Naive thymus-derived CD8-positive, alpha-beta T cell (primary cell): ENCODE measurements at regions of chr15 and their contacts with region 1.

Region 1: GRCh38 chr15:31435261-31435911 is 108.8 kb downstream of the KLF13 start:
- DNase-seq: peak; percentile 49 to 94 (median 86)
- ATAC-seq: peak; percentile 73 to 78
- H3K4me3 Mint-ChIP-seq: peak overlapping the region; percentile 77 to 91 (median 84)
- H3K27ac Mint-ChIP-seq: peak overlapping the region; percentile 93 to 100 (median 100)
- H3K4me1 Mint-ChIP-seq: peaks cover 45 to 89% (median 79%) of the 10 kb centered on the region in 4 donors
- H3K27me3 Mint-ChIP-seq: no peaks in the 10 kb centered on the region

Region 2: DNA sequence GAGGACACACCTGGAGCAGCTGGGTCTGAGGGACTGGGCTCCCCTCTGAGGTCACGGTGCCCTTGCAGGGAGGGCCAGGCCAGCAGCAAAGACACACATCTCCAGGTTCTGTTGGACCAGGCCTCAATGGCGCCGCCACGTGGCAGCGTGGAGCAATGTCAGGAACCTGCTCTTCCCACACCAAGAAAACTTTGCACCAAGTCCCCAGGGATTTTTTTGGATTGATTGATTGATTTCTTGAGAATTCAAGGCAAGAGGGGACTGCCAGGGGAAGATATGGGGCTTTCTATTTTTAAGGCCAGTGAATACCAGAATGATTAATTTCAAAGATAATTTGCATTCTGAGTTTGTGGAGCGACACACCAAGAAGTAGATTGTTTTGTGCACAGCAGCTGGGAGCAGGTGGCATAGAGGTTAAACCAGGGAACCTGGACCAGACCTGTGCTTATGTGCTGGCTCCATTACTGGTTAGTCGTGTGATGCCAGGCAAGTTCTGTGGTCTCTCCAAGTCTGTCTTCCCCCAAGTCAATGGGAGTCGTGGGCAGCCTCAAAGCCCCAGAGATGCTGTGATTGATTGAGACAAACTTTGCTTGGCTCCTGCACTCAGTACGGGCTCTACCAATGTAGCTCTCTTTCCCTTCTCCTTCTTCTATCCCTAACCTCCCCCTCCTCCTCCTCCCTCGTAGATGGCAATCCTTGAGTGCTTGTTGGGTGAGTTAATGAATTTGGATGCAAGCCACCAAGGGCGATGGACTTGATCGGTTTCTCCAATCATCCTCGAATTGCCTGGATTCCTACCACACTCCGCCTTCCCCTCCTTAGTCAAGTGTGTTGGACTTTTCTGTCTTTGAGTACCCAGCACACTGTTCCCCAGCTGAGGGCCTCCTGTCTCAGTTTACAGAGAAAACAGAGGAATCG is 237.6 kb before region 1 on chr15:
- POLR2A ChIA-PET with region 1: no interaction called
- DNase-seq: peak in 7 of 10 donors; percentile 26 to 41 (median 37)
- ATAC-seq: peak in 1 of 2 donors; percentile 38
- H3K4me3 Mint-ChIP-seq: no peak overlapping the region
- H3K27ac Mint-ChIP-seq: peak overlapping the region in 3 of 10 donors; percentile 39 to 76 (median 48)
- H3K4me1 Mint-ChIP-seq: peaks cover 11 to 20% (median 14%) of the 10 kb centered on the region in 4 donors
- H3K27me3 Mint-ChIP-seq: peaks cover 0 to 2% (median 0%) of the 10 kb centered on the region in 5 donors

Region 3: DNA sequence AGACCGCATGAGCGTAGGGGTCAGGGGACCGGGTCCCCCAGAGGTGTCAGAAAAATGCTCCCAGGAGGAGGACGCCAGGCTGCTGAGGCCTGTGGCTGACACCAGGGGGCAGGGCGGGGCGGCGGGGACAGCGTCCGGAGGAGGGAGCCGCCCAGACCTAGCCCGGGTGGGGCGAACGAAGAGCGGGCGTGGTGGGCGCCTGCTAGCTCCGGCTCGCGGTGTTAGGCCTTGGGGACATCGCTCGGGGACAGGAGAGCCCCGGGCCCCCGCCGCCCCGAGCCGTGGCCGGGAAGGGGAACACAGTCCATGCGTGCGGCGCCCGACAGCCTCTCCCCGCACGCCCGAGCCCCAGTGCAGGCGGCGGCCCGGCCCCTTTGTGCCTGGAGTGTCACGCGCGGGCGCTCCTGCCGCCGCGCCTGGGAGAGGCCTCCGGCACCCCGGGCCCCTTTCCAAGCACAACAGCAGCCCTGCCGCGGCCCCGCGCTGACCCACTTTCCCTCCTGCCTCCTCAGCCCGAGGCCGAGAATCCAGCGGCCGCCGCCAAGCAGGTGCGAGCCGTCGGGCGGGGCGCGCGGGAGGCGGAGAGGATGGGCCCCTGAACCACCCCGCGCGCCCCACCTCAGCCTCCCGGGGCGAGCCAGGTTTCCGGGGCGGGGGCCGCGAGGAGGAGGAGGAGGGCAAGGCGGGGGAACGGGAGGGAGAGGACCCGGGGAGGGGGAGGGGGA is 219.7 kb before region 1 on chr15:
- POLR2A ChIA-PET with region 1: interaction called, 10 read pairs
- DNase-seq: peak; percentile 52 to 84 (median 73)
- ATAC-seq: peak; percentile 72 to 78
- H3K4me3 Mint-ChIP-seq: peak overlapping the region; percentile 48 to 88 (median 68)
- H3K27ac Mint-ChIP-seq: peak overlapping the region in 9 of 10 donors; percentile 4 to 92 (median 85)
- H3K4me1 Mint-ChIP-seq: peaks cover 16 to 45% (median 35%) of the 10 kb centered on the region in 4 donors
- H3K27me3 Mint-ChIP-seq: no peaks in the 10 kb centered on the region

Region 4: GRCh38 chr15:31279221-31280045 is 156.0 kb before region 1 on chr15:
- POLR2A ChIA-PET with region 1: no interaction called
- DNase-seq: peak in 1 of 10 donors; percentile 11
- ATAC-seq: no peak
- H3K4me3 Mint-ChIP-seq: no peak overlapping the region
- H3K27ac Mint-ChIP-seq: peak overlapping the region in 5 of 10 donors; percentile 2 to 67 (median 45)
- H3K4me1 Mint-ChIP-seq: peaks cover 9 to 21% (median 14%) of the 10 kb centered on the region in 4 donors
- H3K27me3 Mint-ChIP-seq: no peaks in the 10 kb centered on the region

Region 5: DNA sequence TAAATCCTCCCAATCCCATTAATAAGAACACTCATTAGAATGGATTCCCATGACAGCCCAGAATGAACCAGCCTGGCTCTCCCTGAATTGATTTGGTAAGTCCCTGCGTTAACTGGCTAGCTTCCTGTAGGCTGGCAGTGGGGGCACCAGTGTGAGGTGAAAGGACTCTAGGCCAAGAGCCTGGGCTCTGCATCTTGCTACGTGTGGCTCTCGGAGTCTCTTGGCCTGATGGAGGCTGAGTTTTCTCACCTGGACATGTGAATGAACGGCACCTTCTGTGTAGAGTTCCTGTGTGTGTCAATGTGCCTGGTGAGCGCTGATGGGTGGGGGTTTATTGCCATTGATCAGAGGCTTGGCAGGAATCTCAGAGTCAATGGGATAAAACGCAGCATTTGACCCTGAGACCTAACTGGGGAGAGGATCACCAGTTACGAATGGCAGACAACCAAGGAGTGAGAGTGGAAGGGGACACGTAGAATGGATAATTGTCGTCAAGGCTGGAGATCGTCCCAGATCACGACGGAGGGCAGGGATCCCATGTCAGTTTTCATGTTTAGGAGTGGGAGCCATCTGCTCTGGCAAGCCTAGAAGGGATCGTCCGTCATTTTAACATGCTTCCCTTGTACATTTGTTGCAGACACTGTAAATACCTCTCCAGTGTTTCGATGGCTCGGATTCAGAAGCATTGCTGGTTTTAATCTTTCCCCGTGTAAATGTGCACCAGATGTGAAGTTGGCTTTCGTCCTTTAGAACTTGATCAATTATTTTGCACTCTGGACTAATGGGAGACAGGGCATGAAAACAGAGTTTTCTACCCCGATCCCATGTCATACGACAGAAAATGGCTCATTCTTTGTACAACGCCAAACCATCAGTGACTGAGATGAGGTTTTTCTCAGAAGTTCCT is 117.7 kb before region 1 on chr15:
- POLR2A ChIA-PET with region 1: no interaction called
- DNase-seq: peak in 1 of 10 donors; percentile 44
- ATAC-seq: no peak
- H3K4me3 Mint-ChIP-seq: no peak overlapping the region
- H3K27ac Mint-ChIP-seq: peak overlapping the region in 4 of 10 donors; percentile 22 to 35 (median 25)
- H3K4me1 Mint-ChIP-seq: peaks cover 21 to 55% (median 49%) of the 10 kb centered on the region in 4 donors
- H3K27me3 Mint-ChIP-seq: no peaks in the 10 kb centered on the region

Region 6: GRCh38 chr15:31338879-31339557 is 96.4 kb before region 1 on chr15:
- POLR2A ChIA-PET with region 1: interaction called, 104 read pairs
- DNase-seq: no peak
- ATAC-seq: peak in 1 of 2 donors; percentile 14
- H3K4me3 Mint-ChIP-seq: peak overlapping the region; percentile 46 to 98 (median 72)
- H3K27ac Mint-ChIP-seq: peak overlapping the region; percentile 85 to 100 (median 98)
- H3K4me1 Mint-ChIP-seq: peaks cover 55 to 100% (median 98%) of the 10 kb centered on the region in 4 donors
- H3K27me3 Mint-ChIP-seq: no peaks in the 10 kb centered on the region

Region 7: GRCh38 chr15:31379042-31379441 is 56.3 kb before region 1 on chr15:
- POLR2A ChIA-PET with region 1: interaction called, 22 read pairs
- DNase-seq: peak in 2 of 10 donors; percentile 33 to 36
- ATAC-seq: peak; percentile 30 to 41
- H3K4me3 Mint-ChIP-seq: peak overlapping the region in 8 of 10 donors; percentile 15 to 79 (median 74)
- H3K27ac Mint-ChIP-seq: peak overlapping the region; percentile 84 to 97 (median 94)
- H3K4me1 Mint-ChIP-seq: peaks cover 32 to 73% (median 70%) of the 10 kb centered on the region in 4 donors
- H3K27me3 Mint-ChIP-seq: no peaks in the 10 kb centered on the region

Region 8: DNA sequence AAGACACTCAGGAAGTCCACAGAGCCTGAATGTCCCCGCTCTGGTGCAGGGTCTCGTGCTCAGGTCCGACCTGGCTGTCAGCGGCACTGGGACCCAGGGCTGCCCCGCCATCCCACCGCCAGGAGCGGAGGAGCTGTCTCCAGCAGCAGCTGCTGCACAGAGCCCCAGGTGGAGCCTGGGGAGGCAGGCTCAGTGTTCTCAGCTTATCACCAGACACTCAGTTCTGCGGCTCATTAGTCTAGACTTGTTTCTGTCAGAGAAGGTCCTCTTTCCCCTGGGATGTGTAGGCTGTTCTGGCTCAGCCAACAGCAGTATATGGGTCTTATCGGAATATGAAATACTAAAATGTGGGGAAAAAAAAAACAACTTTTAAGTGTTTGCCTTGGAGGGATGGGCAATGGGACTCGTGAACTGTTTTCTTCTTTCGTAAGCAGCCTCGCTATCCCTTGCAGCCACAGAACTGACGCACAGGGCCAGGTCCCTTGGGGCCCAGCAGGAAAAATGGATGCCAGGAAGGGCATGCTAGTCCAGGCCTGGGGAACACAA is 32.8 kb before region 1 on chr15:
- POLR2A ChIA-PET with region 1: interaction called, 23 read pairs
- DNase-seq: no peak
- ATAC-seq: no peak
- H3K4me3 Mint-ChIP-seq: no peak overlapping the region
- H3K27ac Mint-ChIP-seq: peak overlapping the region in 3 of 10 donors; percentile 74 to 93 (median 86)
- H3K4me1 Mint-ChIP-seq: peaks cover 28 to 73% (median 69%) of the 10 kb centered on the region in 4 donors
- H3K27me3 Mint-ChIP-seq: no peaks in the 10 kb centered on the region

Region 9: GRCh38 chr15:31483053-31483985 is 47.9 kb after region 1 on chr15:
- POLR2A ChIA-PET with region 1: interaction called, 168 read pairs
- DNase-seq: peak; percentile 33 to 76 (median 50)
- ATAC-seq: peak; percentile 72 to 79
- H3K4me3 Mint-ChIP-seq: peak overlapping the region; percentile 90 to 98 (median 97)
- H3K27ac Mint-ChIP-seq: peak overlapping the region; percentile 89 to 98 (median 96)
- H3K4me1 Mint-ChIP-seq: peaks cover 31 to 69% (median 60%) of the 10 kb centered on the region in 4 donors
- H3K27me3 Mint-ChIP-seq: peaks cover 0 to 6% (median 0%) of the 10 kb centered on the region in 5 donors